Right cardiac atrium (tissue), 5 donors: ENCODE measurements at regions of chr14 and their contacts with region 1.

Region 1: GRCh38 chr14:99628832-99629618 is 15.9 kb upstream of the HHIPL1 start:
- DNase-seq: peak; percentile 80 to 92 (median 92)
- ATAC-seq: peak; percentile 88 to 90
- H3K4me3 ChIP-seq: no peak overlapping the region
- H3K27ac ChIP-seq: no peak overlapping the region
- H3K4me1 ChIP-seq: no peaks in the 10 kb centered on the region
- H3K27me3 ChIP-seq: no peaks in the 10 kb centered on the region

Region 2: GRCh38 chr14:99192028-99192621 is 436.9 kb before region 1 on chr14:
- intact Hi-C with region 1: no loop called
- DNase-seq: peak; percentile 71 to 88 (median 77)
- ATAC-seq: peak; percentile 95
- H3K4me3 ChIP-seq: peak overlapping the region; percentile 12
- H3K27ac ChIP-seq: no peak overlapping the region
- H3K4me1 ChIP-seq: no peaks in the 10 kb centered on the region
- H3K27me3 ChIP-seq: no peaks in the 10 kb centered on the region

Region 3: DNA sequence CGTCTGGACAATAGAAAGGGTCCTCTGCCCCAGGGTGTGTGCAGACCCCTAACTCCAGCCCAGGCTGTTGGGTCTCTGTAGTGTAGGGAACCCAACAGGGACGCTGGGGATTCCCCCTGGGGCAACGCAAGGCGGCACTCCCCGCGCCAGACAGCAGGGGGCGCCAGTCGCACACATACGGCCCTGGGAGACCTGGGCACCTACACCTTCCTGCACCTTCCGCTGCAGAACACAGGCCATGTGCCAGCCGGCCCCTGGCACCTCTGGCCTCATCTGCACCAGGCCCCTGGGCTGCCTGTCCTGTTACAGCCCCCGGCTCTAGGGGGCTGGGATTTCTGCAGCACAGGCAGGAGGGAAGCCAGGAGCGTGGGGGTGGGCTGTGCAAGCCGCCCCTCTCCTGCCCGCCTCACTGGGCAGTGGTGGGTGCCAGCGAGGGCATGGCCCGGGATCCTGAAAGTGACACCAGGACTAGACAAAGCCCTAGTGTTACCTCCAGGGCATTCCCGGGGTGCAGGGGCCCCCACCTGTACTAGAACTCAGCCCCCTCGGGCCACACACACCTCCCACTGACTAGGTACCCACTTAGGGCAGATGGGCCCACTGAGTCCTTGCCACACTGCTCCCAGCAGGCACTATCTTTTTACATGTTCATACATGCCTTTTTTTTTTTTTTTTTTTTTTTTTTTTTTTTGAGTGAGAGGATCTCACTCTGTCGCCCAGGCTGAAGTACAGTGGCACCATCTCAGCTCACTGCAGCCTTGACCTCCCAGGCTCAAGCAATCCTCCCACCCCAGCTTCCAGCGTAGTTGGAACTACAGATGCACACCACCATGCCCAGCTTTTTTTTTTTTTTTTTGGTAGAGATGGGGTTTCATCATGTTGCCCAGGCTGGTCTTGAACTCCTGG is 110.3 kb before region 1 on chr14:
- intact Hi-C with region 1: loop called (anchors 2 to 5 kb)
- DNase-seq: peak; percentile 64 to 89 (median 89)
- ATAC-seq: peak; percentile 44 to 50
- H3K4me3 ChIP-seq: no peak overlapping the region
- H3K27ac ChIP-seq: no peak overlapping the region
- H3K4me1 ChIP-seq: no peaks in the 10 kb centered on the region
- H3K27me3 ChIP-seq: no peaks in the 10 kb centered on the region

Region 4: GRCh38 chr14:99563233-99564129 is 65.5 kb before region 1 on chr14:
- intact Hi-C with region 1: loop called in 1 of 4 experiments (anchors 5 kb)
- DNase-seq: peak; percentile 76 to 91 (median 88)
- ATAC-seq: peak; percentile 69 to 75
- H3K4me3 ChIP-seq: no peak overlapping the region
- H3K27ac ChIP-seq: no peak overlapping the region
- H3K4me1 ChIP-seq: peaks cover 10% of the 10 kb centered on the region
- H3K27me3 ChIP-seq: no peaks in the 10 kb centered on the region